Tibial artery (tissue), 4 donors: ENCODE measurements at regions of chr10 and their contacts with region 1.

Region 1: GRCh38 chr10:123008439-123009205 is at the starts of genes ACADSB and IKZF5:
- DNase-seq: peak; percentile 98
- H3K4me3 ChIP-seq: peak within 1 kb of the TSS; percentile 84 to 90
- H3K27ac ChIP-seq: peak within 1 kb of the TSS; percentile 94
- H3K4me1 ChIP-seq: peaks cover 0 to 49% (median 16%) of the 10 kb centered on the region in 4 donors
- H3K27me3 ChIP-seq: no peaks in the 10 kb centered on the region
- CTCF ChIP-seq: no peak

Region 2: DNA sequence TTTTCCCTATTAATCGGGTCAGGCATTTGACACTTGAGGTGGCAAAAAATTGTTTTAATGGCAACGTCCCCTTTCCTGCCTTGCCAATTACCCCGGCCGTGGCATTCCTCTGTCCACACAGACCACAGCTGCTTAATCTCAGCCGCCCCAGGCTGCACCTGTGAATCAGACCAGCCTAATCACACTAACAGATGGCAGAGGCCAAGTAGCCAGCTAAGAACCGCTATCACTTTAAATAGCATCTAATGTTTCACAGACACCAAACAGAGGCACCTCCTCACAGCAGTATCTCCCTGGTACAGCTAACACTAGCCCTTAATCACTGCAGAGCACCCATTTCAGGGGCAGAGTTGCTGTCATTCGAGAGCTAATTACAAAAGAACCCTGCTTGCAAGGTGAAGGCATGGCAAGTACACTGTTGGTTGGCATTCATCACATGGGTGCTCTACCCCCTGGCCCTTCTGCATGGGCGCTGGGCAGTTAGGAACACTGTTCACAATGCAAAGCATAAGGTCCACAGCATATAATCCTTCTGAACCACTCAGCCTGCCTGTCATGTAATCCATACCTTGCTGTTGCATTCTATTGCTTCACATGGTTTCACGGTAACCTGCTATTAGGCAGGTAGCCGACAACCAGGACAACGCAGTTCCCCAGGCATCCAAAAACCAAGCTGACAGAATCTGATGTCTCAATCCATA is 1449.1 kb before region 1 on chr10:
- intact Hi-C with region 1: no loop called
- DNase-seq: no peak
- H3K4me3 ChIP-seq: no peak overlapping the region
- H3K27ac ChIP-seq: no peak overlapping the region
- H3K4me1 ChIP-seq: peaks cover 0 to 35% (median 7%) of the 10 kb centered on the region in 4 donors
- H3K27me3 ChIP-seq: no peaks in the 10 kb centered on the region
- CTCF ChIP-seq: no peak

Region 3: DNA sequence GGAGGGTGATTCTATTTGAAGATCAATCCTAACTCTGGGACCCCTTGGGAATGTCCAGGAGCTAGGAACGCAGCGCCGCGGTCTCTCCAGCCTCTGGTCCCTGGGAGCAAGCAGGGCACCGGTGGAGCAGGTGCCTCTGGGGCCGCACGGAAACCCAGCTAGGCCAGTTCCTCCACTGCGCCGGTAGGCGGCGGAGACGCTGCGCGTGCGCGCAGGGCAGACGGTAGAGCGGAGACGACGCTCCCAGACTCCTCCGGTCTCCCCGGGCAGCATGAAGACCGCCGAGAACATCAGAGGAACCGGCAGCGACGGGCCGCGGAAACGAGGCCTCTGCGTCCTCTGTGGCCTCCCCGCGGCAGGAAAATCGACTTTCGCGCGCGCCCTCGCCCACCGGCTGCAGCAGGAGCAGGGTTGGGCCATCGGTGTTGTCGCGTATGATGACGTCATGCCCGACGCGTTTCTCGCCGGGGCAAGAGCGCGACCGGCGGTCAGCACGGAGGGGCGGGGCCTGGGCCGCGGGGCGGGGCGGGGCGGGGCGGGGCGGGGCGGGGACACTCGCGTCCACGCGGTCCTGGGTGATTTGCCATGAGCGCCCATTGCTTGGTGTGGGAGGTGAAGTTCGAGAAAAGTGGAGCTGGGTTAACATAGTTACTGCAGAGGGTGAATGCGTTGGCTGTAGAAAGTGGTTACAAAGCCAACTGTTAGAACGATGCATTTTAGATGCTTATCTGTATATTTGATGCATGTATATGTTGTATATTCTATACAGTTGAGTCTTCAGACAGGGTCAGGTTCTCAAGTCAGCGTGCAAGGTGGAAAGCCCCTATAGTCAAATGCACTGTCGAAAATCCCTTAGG is 28.2 kb before region 1 on chr10 and contains the start of gene PSTK:
- intact Hi-C with region 1: loop called (anchors 1 kb)
- DNase-seq: peak; percentile 85 to 93
- H3K4me3 ChIP-seq: peak within 1 kb of the TSS; percentile 64 to 88
- H3K27ac ChIP-seq: peak within 1 kb of the TSS; percentile 81 to 90
- H3K4me1 ChIP-seq: peaks cover 0 to 13% (median 6%) of the 10 kb centered on the region in 4 donors
- H3K27me3 ChIP-seq: no peaks in the 10 kb centered on the region
- CTCF ChIP-seq: peak; percentile 96 to 99

Region 4: GRCh38 chr10:123154092-123154921 is 145.7 kb after region 1 on chr10 and contains the start of gene BUB3:
- intact Hi-C with region 1: loop called (anchors 5 kb)
- DNase-seq: peak; percentile 99
- H3K4me3 ChIP-seq: peak within 1 kb of the TSS; percentile 95 to 96
- H3K27ac ChIP-seq: peak within 1 kb of the TSS; percentile 89 to 93
- H3K4me1 ChIP-seq: peaks cover 0 to 43% (median 32%) of the 10 kb centered on the region in 4 donors
- H3K27me3 ChIP-seq: peaks cover 0 to 41% of the 10 kb centered on the region in 2 donors
- CTCF ChIP-seq: peak; percentile 12 to 25